Caco-2 (cell line): ENCODE measurements at regions of chr18 and their contacts with region 1.

Region 1: DNA sequence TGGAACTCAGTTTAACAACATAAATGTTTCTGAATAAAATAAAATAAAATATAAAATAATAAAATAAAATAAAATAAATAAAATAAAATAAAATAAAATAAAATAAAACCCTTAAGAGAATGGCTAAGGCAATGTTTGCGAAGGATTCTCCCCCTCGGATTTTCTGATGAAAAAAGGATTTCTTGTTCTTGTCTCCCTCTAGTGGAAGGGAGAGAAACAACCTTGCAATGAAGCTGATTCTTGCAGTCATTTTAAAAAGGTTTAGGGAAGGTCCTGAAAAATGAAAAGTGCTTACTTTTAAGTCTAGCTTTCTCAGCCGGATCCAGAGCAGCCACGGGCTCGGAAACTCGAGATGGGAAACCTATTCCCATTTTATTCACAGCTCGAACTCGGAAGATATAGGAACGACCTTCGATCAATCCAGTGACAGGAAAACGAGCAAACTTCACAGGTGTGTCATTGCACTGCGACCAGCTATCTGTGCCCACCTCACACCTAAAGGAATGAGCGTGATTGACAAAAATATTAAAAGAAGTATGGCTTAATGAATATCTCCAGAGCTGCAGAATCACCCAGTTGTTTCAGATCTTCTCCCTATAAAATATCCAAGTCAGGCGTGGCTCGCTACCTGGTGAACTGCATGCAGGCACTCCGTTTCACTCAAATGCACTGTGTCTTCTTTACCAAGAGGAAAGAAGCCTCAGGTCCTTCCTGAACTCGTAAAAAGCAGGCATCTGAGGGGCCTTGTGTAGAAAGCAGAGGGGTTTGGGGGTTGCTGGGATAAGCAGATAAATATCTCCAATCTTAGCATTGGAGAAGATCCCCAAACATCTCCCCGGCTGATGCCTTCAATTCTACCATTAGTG is 68.1 kb downstream of the MYOM1 start:
- DNase-seq: peak in 1 of 2 experiments; percentile 32
- H3K4me3 ChIP-seq: no peak overlapping the region
- H3K4me3 Mint-ChIP-seq: peak overlapping the region; percentile 61
- H3K27ac Mint-ChIP-seq: no peak overlapping the region
- H3K4me1 ChIP-seq: no peaks in the 10 kb centered on the region
- H3K4me1 Mint-ChIP-seq: no peaks in the 10 kb centered on the region
- H3K27me3 ChIP-seq: no peaks in the 10 kb centered on the region
- H3K27me3 Mint-ChIP-seq: no peaks in the 10 kb centered on the region
- CTCF ChIP-seq: peak; percentile 79 to 88

Region 2: GRCh38 chr18:2920546-2921343 is 230.9 kb before region 1 on chr18:
- CTCF ChIA-PET with region 1: no interaction called
- POLR2A ChIA-PET with region 1: no interaction called
- intact Hi-C with region 1: no loop called
- DNase-seq: no peak
- H3K4me3 ChIP-seq: no peak overlapping the region
- H3K4me3 Mint-ChIP-seq: no peak overlapping the region
- H3K27ac Mint-ChIP-seq: peak overlapping the region; percentile 17
- H3K4me1 ChIP-seq: no peaks in the 10 kb centered on the region
- H3K4me1 Mint-ChIP-seq: no peaks in the 10 kb centered on the region
- H3K27me3 ChIP-seq: no peaks in the 10 kb centered on the region
- H3K27me3 Mint-ChIP-seq: no peaks in the 10 kb centered on the region
- CTCF ChIP-seq: no peak

Region 3: DNA sequence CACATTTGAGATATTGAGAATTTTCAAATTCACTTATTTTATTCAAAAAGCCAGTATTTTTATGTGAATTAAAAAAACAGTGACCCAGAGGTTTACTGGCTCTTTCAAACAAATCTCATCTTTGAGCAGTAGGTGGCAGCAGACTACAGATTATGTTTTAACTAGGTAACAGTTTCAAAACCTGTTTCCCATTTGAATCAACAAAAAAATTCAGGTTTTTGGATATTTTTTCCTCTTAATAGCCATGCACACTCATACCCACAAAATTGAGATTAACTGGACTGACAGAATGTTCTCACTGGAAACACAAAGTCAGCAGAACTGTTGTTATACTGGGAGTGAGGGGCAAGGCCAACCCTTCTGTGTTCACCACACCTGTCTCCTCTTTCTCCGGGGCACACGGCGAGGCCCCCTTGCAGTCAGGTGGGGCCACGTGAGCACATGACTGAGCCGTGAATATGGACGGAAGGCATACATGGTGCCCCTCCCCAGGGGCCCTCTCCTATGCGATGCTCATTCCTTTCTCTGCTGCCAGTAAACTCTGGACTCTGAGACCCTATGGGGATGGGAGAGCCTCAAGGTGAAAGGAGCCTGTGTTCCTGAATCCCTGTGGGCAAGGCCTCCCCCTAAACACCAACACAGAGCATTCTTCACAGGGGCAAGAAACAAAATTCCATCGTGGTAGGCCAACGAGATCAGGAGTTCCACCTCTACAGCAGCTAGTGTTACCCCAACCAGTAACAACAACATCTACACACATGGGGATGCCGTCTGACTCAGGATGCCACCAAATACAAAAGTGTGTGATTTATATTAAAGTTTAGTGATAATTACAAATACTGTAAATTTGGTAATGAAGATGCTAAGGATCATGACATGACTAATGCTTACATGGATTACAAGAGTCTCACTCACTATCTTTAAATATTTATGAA is 219.1 kb before region 1 on chr18:
- CTCF ChIA-PET with region 1: interaction called, 4 read pairs
- POLR2A ChIA-PET with region 1: no interaction called
- intact Hi-C with region 1: loop called (anchors 1 kb)
- DNase-seq: peak in 1 of 2 experiments; percentile 68
- H3K4me3 ChIP-seq: no peak overlapping the region
- H3K4me3 Mint-ChIP-seq: no peak overlapping the region
- H3K27ac Mint-ChIP-seq: no peak overlapping the region
- H3K4me1 ChIP-seq: no peaks in the 10 kb centered on the region
- H3K4me1 Mint-ChIP-seq: peaks cover 6% of the 10 kb centered on the region
- H3K27me3 ChIP-seq: no peaks in the 10 kb centered on the region
- H3K27me3 Mint-ChIP-seq: no peaks in the 10 kb centered on the region
- CTCF ChIP-seq: peak; percentile 73 to 75

Region 4: GRCh38 chr18:3135536-3135935 is 16.1 kb before region 1 on chr18:
- CTCF ChIA-PET with region 1: no interaction called
- POLR2A ChIA-PET with region 1: no interaction called
- intact Hi-C with region 1: no loop called
- DNase-seq: no peak
- H3K4me3 ChIP-seq: no peak overlapping the region
- H3K4me3 Mint-ChIP-seq: no peak overlapping the region
- H3K27ac Mint-ChIP-seq: no peak overlapping the region
- H3K4me1 ChIP-seq: peaks cover 5% of the 10 kb centered on the region
- H3K4me1 Mint-ChIP-seq: no peaks in the 10 kb centered on the region
- H3K27me3 ChIP-seq: no peaks in the 10 kb centered on the region
- H3K27me3 Mint-ChIP-seq: no peaks in the 10 kb centered on the region
- CTCF ChIP-seq: no peak

Region 5: GRCh38 chr18:3261371-3262246 is 110.0 kb after region 1 on chr18 and contains the start of gene MYL12B:
- CTCF ChIA-PET with region 1: no interaction called
- POLR2A ChIA-PET with region 1: interaction called, 11 read pairs
- intact Hi-C with region 1: no loop called
- DNase-seq: peak; percentile 83 to 89
- H3K4me3 ChIP-seq: peak within 1 kb of the TSS; percentile 97
- H3K4me3 Mint-ChIP-seq: peak within 1 kb of the TSS; percentile 84
- H3K27ac Mint-ChIP-seq: peak within 1 kb of the TSS; percentile 99
- H3K4me1 ChIP-seq: peaks cover 54% of the 10 kb centered on the region
- H3K4me1 Mint-ChIP-seq: peaks cover 38% of the 10 kb centered on the region
- H3K27me3 ChIP-seq: no peaks in the 10 kb centered on the region
- H3K27me3 Mint-ChIP-seq: no peaks in the 10 kb centered on the region
- CTCF ChIP-seq: no peak
- total RNA-seq, gene MYL12B: 457 and 467 TPM in 2 replicates

Region 6: GRCh38 chr18:3790703-3791102 is 639.1 kb after region 1 on chr18:
- CTCF ChIA-PET with region 1: interaction called, 12 read pairs
- POLR2A ChIA-PET with region 1: no interaction called
- intact Hi-C with region 1: no loop called
- DNase-seq: no peak
- H3K4me3 ChIP-seq: no peak overlapping the region
- H3K4me3 Mint-ChIP-seq: no peak overlapping the region
- H3K27ac Mint-ChIP-seq: no peak overlapping the region
- H3K4me1 ChIP-seq: no peaks in the 10 kb centered on the region
- H3K4me1 Mint-ChIP-seq: peaks cover 5% of the 10 kb centered on the region
- H3K27me3 ChIP-seq: no peaks in the 10 kb centered on the region
- H3K27me3 Mint-ChIP-seq: peaks cover 4% of the 10 kb centered on the region
- CTCF ChIP-seq: no peak